Panc1 (cell line): ENCODE measurements at regions of chr6 and their contacts with region 1.

Region 1: GRCh38 chr6:157379656-157380454 is 1.1 kb upstream of the ZDHHC14 start:
- DNase-seq: peak; percentile 62
- ATAC-seq: peak; percentile 88
- H3K4me3 ChIP-seq: peak overlapping the region; percentile 68 to 88
- H3K27ac ChIP-seq: peak overlapping the region; percentile 91
- H3K4me1 ChIP-seq: peaks cover 22% of the 10 kb centered on the region
- H3K27me3 ChIP-seq: no peaks in the 10 kb centered on the region
- CTCF ChIP-seq: no peak

Region 2: DNA sequence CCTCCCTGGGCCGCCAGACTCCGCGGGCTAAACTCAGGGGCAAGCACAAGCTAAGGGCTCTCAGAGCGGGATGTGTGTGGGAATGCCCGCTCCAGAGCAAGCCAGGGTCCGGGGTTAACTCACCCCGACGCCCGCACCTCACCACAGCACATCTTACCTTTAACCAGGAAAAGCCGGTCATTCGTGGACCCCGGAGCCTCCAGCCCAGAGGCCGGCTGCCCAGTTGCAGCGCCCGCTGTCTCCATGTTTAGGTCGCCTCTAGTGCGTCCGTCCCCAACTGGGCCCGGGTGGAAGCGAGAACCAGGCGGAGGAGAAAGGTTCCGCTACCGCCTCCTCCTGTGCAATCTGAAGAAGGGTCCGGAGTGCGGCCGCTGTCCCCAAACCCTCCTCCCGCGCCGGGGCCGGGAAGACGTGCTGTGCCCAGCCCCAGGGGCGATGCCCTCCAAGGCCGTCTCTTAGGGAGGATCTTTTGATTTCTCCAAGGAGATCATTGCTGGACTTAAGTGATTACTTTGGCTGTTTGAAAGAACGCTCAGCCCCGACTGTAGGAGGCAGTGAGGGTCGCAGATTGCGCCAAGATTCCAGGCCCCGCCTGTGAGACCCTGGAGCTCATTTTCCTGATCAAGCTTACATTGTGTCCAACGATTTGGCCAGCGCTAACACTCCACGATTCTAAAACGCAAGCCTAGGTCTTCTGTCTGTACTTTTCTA is 56.4 kb before region 1 on chr6 and contains the start of gene TMEM242:
- CTCF ChIA-PET with region 1: no interaction called
- POLR2A ChIA-PET with region 1: no interaction called
- in situ Hi-C with region 1: no loop called
- intact Hi-C with region 1: loop called (anchors 10 kb)
- DNase-seq: peak; percentile 86
- ATAC-seq: peak; percentile 98
- H3K4me3 ChIP-seq: peak within 1 kb of the TSS; percentile 80 to 97
- H3K27ac ChIP-seq: peak within 1 kb of the TSS; percentile 93
- H3K4me1 ChIP-seq: no peaks in the 10 kb centered on the region; the same call in 1 of the 2 replicates
- H3K27me3 ChIP-seq: no peaks in the 10 kb centered on the region
- CTCF ChIP-seq: no peak; the same call in 1 of the 2 replicates
- total RNA-seq, gene TMEM242: 6.8 TPM

Region 3: DNA sequence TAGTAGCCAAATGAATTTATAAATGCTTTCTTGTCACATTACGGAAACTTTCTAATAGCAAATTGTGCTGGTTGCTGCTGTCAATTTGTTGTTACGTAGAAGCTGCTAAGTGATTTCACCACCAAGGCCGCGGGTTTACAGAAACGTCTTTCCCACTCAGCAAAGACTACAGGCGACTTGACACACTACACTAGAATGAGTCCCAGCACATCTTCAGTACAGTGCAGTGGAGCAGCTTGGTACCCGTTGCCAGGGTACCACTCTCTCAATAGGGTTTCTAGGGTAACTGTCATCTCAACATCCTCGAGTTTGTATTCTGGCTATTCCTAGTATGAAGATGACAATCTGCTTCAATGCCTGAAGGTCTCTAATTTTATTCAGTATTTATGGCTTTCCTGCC is 21.6 kb before region 1 on chr6:
- CTCF ChIA-PET with region 1: no interaction called
- POLR2A ChIA-PET with region 1: interaction called, 10 read pairs
- in situ Hi-C with region 1: no loop called
- intact Hi-C with region 1: no loop called
- DNase-seq: no peak
- ATAC-seq: no peak
- H3K4me3 ChIP-seq: no peak overlapping the region
- H3K27ac ChIP-seq: no peak overlapping the region
- H3K4me1 ChIP-seq: no peaks in the 10 kb centered on the region
- H3K27me3 ChIP-seq: peaks cover 5% of the 10 kb centered on the region; the same call in 1 of the 2 replicates
- CTCF ChIP-seq: no peak

Region 4: DNA sequence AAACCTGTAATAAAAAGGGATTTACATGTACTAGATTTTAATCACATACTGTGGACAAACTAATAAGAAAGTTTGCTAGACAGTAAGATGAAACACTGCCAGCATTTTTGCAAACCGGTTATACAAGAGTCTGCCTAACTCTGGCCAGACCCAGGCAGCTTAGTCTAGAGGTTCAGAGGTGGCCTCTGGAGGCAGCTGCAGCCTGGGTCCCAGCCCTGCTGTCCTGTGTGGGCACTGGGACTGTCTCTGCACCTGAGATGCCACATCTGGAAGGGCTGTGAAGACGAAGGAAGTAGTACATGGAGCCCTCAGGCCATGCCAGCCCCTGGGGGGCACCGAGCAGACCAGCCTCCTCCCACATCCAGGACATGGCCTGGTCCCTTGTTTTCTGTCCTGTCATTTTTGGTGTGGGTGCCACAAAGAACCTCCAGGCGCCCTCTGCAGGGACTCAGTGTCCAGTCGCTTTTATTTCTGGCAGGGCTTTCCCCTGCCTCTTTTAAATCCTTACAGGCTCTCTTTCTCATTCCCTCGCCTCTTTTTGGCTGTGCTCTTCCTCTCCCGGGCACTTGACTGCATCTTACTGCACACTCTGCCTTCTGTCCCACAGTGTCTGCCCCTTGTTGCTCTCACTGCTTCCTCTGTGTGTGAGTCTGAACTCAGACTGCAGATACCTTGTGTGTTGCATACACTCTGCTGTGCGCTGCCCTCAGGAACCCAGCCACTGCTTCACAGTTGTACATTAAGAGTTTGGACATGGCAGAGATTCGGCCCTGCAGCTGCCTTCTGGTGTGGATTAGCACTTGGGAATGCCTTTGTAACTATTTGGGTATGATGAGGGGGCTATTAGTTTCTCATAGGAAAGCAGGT is 217.8 kb after region 1 on chr6:
- CTCF ChIA-PET with region 1: no interaction called
- POLR2A ChIA-PET with region 1: no interaction called
- in situ Hi-C with region 1: no loop called
- intact Hi-C with region 1: loop called (anchors 10 kb)
- DNase-seq: no peak
- ATAC-seq: peak; percentile 87
- H3K4me3 ChIP-seq: no peak overlapping the region
- H3K27ac ChIP-seq: no peak overlapping the region
- H3K4me1 ChIP-seq: no peaks in the 10 kb centered on the region
- H3K27me3 ChIP-seq: no peaks in the 10 kb centered on the region
- CTCF ChIP-seq: peak; percentile 84

Region 5: DNA sequence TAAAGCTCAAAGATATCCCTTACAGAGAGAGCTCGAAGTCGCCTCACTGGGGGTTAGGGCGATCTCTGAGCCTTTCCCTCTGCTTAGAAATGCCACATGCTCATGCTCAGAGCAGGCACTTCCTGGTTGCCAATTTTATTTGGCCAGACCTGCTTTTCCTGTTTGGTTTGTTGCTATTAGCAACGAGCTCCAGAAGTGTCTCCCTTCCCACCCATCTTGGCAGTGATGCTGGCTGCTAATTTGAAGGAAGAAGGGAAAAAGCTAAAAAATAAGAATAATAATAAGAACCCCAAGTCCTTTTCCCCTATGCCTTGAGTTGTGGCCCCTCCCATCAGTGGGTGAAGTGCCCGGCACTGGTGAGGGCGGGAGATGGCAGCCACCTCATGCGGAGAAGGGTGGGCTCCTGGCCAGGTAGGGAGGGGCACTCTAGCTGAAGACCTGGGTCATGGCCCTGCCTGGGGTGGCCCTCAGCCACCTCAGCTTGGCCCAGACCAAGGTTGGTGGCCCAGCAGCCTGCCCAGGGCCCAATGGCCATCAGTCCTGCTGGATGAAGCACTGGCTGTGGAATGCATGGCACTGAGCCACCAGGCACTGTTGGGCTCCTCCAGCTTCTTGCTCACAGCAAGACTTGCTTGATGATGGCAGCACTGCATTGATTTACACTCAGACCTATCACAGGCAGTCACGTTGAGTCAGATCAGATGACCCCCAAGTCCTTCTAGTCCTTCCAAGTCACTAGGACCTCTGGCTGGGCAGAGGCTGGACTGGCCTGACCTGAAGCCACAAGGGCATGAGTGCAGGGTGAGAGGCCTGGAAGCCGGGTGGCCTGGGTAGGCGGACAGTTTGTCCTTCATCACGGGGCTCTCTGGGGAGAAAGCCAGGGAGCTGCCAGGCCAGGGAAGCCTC is 680.9 kb after region 1 on chr6:
- CTCF ChIA-PET with region 1: no interaction called
- POLR2A ChIA-PET with region 1: no interaction called
- in situ Hi-C with region 1: no loop called
- intact Hi-C with region 1: no loop called
- DNase-seq: no peak
- ATAC-seq: peak; percentile 60
- H3K4me3 ChIP-seq: no peak overlapping the region
- H3K27ac ChIP-seq: peak overlapping the region; percentile 75
- H3K4me1 ChIP-seq: peaks cover 34% of the 10 kb centered on the region
- H3K27me3 ChIP-seq: no peaks in the 10 kb centered on the region
- CTCF ChIP-seq: no peak